ENCODE measurements at regions of chr7 and their contacts with region 1.

Region 1: DNA sequence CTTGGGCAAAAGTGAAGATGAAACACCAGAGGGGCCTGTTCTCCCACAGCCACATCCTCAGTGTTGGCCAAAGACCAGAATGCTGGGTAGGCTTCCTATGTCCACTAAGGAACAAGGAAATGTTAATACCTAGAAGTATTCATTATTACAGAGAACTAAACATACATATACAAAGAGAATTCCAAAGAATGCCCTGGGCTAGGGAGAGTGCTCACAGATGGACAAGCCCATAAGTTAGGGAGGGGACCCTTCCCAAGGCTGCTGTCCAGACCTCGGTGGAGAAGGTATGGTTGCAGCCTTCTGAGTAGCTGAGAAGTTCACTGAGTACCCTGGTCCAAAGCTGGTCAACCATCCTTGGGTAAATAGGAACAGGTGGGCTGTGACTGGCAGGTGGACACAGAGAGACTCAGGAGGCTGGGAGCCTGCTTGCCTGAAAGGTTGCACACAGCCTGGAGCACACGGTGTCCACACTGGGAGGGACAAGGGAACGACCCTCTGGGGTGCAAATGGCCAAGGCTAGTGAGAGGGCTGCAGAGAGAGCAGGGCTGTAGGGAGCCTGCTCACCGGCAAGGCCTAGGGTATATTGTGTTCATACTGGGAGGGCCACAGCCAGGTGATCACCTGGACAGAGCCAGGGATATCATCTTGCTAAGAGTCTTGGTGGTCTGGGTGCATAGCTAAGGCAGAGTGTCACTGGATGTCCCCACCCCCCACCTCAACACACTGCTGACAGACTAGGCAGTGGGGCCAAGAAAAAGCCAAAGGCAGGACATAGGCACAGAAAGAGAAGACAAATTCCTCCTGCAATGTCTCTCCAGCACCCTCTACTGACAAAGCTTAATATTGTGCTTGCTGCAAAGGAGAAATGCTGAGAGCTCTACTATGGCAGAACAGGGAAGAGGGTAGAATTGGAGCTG is 40.3 kb downstream of the CPVL start:
- DNase-seq: peak; percentile 22
- ATAC-seq: peak; percentile 82
- H3K4me3 Mint-ChIP-seq: no peak overlapping the region
- H3K27ac Mint-ChIP-seq: no peak overlapping the region
- H3K4me1 Mint-ChIP-seq: no peaks in the 10 kb centered on the region
- H3K27me3 Mint-ChIP-seq: no peaks in the 10 kb centered on the region
- CTCF ChIP-seq: peak; percentile 70

Region 2: DNA sequence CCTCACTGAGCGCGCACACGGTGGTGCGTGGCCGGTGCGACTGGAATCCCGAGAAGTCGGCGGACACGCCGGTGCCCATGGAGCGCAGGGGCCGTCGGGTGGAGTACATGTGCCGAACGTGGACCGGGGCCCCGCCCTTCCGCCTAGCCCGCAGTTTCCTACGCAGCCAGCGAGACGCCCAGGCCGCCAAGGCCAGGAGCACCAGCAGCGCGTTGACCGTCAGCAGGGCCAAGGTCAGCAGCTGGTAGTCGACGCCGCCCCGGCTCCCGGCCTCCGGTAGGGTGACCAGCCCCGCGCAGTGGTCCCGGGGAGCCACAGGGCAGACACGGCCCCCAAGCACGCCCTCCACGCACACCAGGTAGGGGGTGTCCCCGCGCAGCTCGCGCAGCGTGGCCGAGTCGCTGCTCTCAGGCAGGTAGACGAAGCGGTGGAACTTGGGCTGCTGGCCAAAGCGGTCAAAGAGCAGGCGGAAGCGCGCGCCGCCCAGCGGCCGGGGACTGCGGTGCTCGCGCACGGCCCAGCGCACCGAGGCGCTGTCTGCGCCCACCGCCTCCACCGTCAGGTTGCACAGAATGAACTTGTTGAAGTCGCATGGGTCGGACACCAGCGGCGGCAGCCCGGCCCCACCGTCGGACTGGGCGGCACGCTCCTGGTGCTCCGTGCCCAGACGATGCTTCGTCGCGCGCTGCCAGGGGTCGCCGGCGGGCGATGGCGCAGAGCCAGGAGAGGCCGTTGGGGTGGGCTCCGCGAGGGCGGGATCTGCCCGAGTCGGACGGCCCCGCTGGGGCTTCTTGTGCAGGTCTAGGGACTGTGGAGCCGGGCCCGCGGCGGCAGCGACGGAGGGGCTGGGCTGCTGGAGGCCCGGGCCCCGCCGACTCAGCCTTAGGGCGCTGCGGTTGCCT is 150.0 kb before region 1 on chr7:
- CTCF ChIA-PET with region 1: interaction called, 18 read pairs
- POLR2A ChIA-PET with region 1: no interaction called
- intact Hi-C with region 1: loop called (anchors 10 kb)
- DNase-seq: peak; percentile 49
- ATAC-seq: peak; percentile 45
- H3K4me3 Mint-ChIP-seq: no peak overlapping the region
- H3K27ac Mint-ChIP-seq: no peak overlapping the region
- H3K4me1 Mint-ChIP-seq: peaks cover 9% of the 10 kb centered on the region
- H3K27me3 Mint-ChIP-seq: peaks cover 58% of the 10 kb centered on the region
- CTCF ChIP-seq: peak; percentile 44

Region 3: DNA sequence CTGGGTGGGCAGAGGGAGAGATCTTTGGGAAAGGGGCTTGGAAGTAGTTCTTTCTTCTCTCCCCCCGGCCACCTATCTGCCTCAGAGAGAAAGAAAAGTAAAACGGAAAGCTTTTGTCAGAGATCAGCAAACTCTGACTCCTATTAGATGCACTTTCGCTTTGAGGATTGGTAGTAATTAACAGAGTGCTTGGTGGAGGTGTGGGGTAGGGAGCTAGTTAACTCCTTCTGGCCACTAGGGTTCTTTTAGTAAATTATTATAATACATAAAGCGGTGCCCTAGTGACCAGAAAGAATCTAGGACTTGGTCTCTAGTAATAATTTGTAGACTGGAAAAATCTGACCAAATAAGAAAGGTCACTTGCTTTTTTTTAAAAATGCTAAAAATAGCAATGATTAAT is 14.3 kb before region 1 on chr7:
- CTCF ChIA-PET with region 1: interaction called, 14 read pairs
- POLR2A ChIA-PET with region 1: no interaction called
- intact Hi-C with region 1: no loop called
- DNase-seq: peak; percentile 7
- ATAC-seq: peak; percentile 86
- H3K4me3 Mint-ChIP-seq: peak overlapping the region; percentile 59
- H3K27ac Mint-ChIP-seq: no peak overlapping the region
- H3K4me1 Mint-ChIP-seq: peaks cover 9% of the 10 kb centered on the region
- H3K27me3 Mint-ChIP-seq: peaks cover 7% of the 10 kb centered on the region
- CTCF ChIP-seq: no peak

Region 4: DNA sequence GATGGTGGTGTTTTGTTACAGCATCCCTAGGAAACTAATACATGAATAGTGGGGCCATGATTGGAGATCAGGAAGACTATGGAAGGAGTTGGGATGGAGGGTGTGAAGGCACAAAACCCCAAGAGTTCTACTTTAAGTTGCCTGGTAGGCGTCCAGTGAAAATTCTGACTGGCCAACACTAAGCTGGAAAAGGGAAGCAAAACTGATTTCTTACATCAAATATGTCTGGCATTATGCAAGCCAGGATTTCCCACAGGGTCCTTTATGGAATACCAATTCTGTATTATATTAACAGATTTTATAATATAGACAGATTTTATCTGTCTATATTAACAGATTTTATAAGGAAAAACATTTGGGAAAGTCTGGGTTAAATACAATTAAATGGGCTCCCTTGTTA is 24.1 kb after region 1 on chr7:
- CTCF ChIA-PET with region 1: interaction called, 11 read pairs
- POLR2A ChIA-PET with region 1: no interaction called
- intact Hi-C with region 1: no loop called
- DNase-seq: no peak
- ATAC-seq: no peak
- H3K4me3 Mint-ChIP-seq: no peak overlapping the region
- H3K27ac Mint-ChIP-seq: no peak overlapping the region
- H3K4me1 Mint-ChIP-seq: no peaks in the 10 kb centered on the region
- H3K27me3 Mint-ChIP-seq: peaks cover 6% of the 10 kb centered on the region
- CTCF ChIP-seq: no peak